B cell (primary cell): ENCODE measurements at regions of chr16 and their contacts with region 1.

Region 1: DNA sequence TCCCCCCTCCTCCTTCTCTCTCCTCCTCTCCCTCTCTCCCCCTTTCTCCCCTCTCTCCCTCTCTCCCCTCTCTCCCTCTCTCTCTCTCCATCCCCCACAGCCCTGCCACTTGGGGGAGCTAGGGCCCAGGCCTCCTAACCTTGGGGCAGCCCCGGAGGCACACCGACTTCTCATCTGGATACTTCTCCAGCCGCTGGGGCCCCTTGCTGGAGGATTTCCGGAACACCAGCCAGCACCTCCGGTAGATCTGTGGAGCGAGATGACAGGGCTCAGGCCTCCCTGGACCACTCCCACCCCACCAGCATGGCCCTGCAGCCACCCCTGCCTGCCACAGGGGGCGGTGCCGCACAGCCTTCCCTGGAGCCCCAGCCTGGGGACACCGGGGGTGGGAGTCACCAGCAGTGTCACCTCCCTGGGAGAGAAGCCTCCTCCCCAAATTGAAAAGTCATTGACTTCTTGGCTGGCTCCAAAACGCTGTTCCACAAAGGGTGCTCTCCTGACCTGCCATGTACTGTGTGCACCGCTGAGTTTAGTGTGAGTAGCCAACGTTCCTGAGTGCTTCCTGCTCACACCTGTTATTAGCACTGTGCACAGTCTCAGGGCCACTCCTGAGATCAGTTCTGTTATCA is 10.5 kb downstream of the DOK4 start:
- DNase-seq: peak; percentile 78
- ATAC-seq: peak; percentile 93
- H3K4me3 ChIP-seq: no peak overlapping the region
- H3K4me3 Mint-ChIP-seq: peak overlapping the region; percentile 65
- H3K27ac ChIP-seq: no peak overlapping the region
- H3K27ac Mint-ChIP-seq: peak overlapping the region; percentile 7
- H3K4me1 ChIP-seq: peaks cover 33 to 48% of the 10 kb centered on the region in 2 donors
- H3K4me1 Mint-ChIP-seq: peaks cover 33% of the 10 kb centered on the region
- H3K27me3 ChIP-seq: peaks cover 0 to 13% (median 0%) of the 10 kb centered on the region in 4 experiments
- H3K27me3 Mint-ChIP-seq: peaks cover 9% of the 10 kb centered on the region
- CTCF ChIP-seq: peak; percentile 87

Region 2: GRCh38 chr16:57194512-57194911 is 281.3 kb before region 1 on chr16:
- CTCF ChIA-PET with region 1: no interaction called
- POLR2A ChIA-PET with region 1: no interaction called
- intact Hi-C with region 1: no loop called
- DNase-seq: no peak
- ATAC-seq: no peak
- H3K4me3 ChIP-seq: no peak overlapping the region
- H3K4me3 Mint-ChIP-seq: no peak overlapping the region
- H3K27ac ChIP-seq: no peak overlapping the region
- H3K27ac Mint-ChIP-seq: no peak overlapping the region
- H3K4me1 ChIP-seq: peaks cover 0 to 3% of the 10 kb centered on the region in 2 donors
- H3K4me1 Mint-ChIP-seq: peaks cover 19% of the 10 kb centered on the region
- H3K27me3 ChIP-seq: no peaks in the 10 kb centered on the region
- H3K27me3 Mint-ChIP-seq: no peaks in the 10 kb centered on the region
- CTCF ChIP-seq: no peak

Region 3: DNA sequence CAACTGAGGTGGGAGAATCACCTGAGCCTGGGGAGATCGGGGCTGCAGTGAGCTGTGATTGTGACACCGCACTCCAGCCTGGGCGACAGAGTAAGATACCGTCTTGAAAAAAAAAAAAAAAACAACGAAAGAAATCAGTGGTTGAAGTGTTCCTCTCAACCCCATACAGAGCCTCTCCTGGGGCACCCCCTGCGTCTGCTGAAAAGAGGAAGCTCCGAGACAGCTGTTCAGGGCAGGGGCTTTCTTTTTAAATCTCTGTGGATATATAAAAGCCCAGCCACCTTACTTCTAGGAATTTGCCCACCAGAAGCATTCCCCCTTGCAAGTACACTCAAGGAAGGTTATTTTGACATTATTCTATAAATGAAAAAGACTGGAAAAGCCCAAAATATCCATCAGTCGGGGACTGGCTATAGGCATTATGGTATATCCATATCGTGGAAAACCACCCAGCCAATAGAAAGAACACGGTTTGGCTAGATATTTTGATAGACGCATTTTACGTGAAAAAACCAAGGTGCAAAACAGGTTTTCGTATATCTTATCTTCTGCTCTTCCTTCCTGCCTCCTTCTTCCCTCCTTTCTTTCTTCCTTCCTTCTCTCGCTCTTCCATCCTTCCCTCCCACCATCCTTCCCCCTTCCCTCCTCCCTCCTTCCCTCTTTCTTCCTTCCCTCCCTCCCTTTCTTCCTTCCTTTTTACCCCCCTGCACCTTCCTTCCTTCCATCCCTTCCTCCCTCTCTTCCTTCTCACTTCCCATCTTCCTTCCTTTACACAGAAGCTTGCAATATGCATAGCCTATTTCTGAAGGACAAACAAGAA is 126.4 kb before region 1 on chr16:
- CTCF ChIA-PET with region 1: no interaction called
- POLR2A ChIA-PET with region 1: no interaction called
- intact Hi-C with region 1: no loop called
- DNase-seq: peak; percentile 90
- ATAC-seq: peak; percentile 98
- H3K4me3 ChIP-seq: peak overlapping the region in 2 of 5 experiments; percentile 2 to 39
- H3K4me3 Mint-ChIP-seq: peak overlapping the region; percentile 50
- H3K27ac ChIP-seq: no peak overlapping the region
- H3K27ac Mint-ChIP-seq: peak overlapping the region; percentile 47
- H3K4me1 ChIP-seq: peaks cover 16 to 17% of the 10 kb centered on the region in 2 donors
- H3K4me1 Mint-ChIP-seq: peaks cover 32% of the 10 kb centered on the region
- H3K27me3 ChIP-seq: peaks cover 0 to 13% (median 6%) of the 10 kb centered on the region in 4 experiments
- H3K27me3 Mint-ChIP-seq: peaks cover 14% of the 10 kb centered on the region
- CTCF ChIP-seq: no peak

Region 4: DNA sequence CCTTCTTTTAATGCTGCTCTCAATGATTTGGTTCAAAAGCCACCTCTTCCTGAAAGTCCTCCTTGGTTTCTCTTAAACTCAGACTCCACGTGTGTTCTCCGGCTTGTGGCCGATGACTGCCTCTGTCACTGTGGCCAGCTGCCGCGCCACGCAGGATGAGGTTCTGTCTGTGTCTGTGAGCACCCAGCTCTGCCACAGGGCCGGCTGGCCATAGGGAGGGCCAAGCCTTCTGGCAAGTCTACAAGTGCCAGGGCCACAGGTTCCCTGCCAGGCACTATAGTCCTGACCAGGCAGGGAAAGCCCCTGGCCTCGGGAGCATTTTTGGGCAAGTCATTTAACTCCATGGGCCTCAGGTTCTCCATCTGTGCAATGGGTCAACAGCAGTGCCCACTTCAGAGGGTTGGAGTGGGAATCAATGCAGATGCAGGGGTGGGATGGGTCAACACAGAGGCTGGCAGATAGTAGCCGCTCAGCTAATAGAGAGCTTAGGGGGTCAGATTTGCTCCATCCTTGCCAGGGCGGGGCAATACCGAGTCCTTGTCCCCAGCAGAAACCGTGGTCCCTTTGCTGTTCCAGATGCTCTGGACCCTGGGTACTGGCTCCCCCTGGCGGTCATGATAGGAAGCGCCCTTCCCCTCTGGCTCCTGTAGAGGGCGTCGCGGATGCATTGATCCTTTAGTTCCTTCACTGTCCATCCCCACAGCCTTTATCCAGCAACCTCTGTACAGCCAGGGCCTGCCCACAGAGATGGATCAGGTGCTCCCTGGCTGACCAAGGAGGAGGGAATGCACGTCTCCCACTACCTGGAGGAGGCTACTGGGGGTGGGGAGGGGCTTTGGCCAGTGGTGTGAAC is 173.0 kb after region 1 on chr16:
- CTCF ChIA-PET with region 1: no interaction called
- POLR2A ChIA-PET with region 1: no interaction called
- intact Hi-C with region 1: loop called (anchors 2 kb)
- DNase-seq: peak; percentile 83
- ATAC-seq: peak; percentile 82
- H3K4me3 ChIP-seq: no peak overlapping the region
- H3K4me3 Mint-ChIP-seq: no peak overlapping the region
- H3K27ac ChIP-seq: peak overlapping the region; percentile 36 to 61
- H3K27ac Mint-ChIP-seq: peak overlapping the region; percentile 53
- H3K4me1 ChIP-seq: peaks cover 23 to 27% of the 10 kb centered on the region in 2 donors
- H3K4me1 Mint-ChIP-seq: peaks cover 32% of the 10 kb centered on the region
- H3K27me3 ChIP-seq: peaks cover 0 to 3% (median 0%) of the 10 kb centered on the region in 4 experiments
- H3K27me3 Mint-ChIP-seq: no peaks in the 10 kb centered on the region
- CTCF ChIP-seq: peak; percentile 99

Region 5: GRCh38 chr16:58198022-58198683 is 722.3 kb after region 1 on chr16 and contains the start of gene CSNK2A2:
- CTCF ChIA-PET with region 1: no interaction called
- POLR2A ChIA-PET with region 1: interaction called, 11 read pairs
- intact Hi-C with region 1: no loop called
- DNase-seq: peak; percentile 82
- ATAC-seq: peak; percentile 93
- H3K4me3 ChIP-seq: peak within 1 kb of the TSS; percentile 44 to 83 (median 64)
- H3K4me3 Mint-ChIP-seq: peak within 1 kb of the TSS; percentile 90
- H3K27ac ChIP-seq: peak within 1 kb of the TSS in 1 of 2 donors; percentile 55
- H3K27ac Mint-ChIP-seq: peak within 1 kb of the TSS; percentile 81
- H3K4me1 ChIP-seq: peaks cover 15 to 18% of the 10 kb centered on the region in 2 donors
- H3K4me1 Mint-ChIP-seq: peaks cover 33% of the 10 kb centered on the region
- H3K27me3 ChIP-seq: peaks cover 0 to 7% (median 2%) of the 10 kb centered on the region in 4 experiments
- H3K27me3 Mint-ChIP-seq: peaks cover 10% of the 10 kb centered on the region
- CTCF ChIP-seq: no peak
- total RNA-seq, gene CSNK2A2: 63.5 and 69.4 TPM in 2 replicates